Activated CD4-positive, alpha-beta T cell treated with anti-CD3 and anti-CD28 coated beads, Interleukin-2, amount 10 ng/mL, durations not matched to agents 24 days and 14 days (primary cell): ENCODE measurements at regions of chr4 and their contacts with region 1.

Region 1: GRCh38 chr4:102344954-102345794 is at the start of gene SLC39A8:
- DNase-seq: peak; percentile 96
- H3K4me3 Mint-ChIP-seq: peak within 1 kb of the TSS; percentile 88
- H3K27ac Mint-ChIP-seq: peak within 1 kb of the TSS; percentile 99
- H3K4me1 Mint-ChIP-seq: peaks cover 39% of the 10 kb centered on the region
- H3K27me3 Mint-ChIP-seq: peaks cover 7% of the 10 kb centered on the region
- total RNA-seq, gene SLC39A8: 80.4 and 81.2 TPM in 2 replicates

Region 2: GRCh38 chr4:101419324-101420135 is 925.6 kb before region 1 on chr4:
- intact Hi-C with region 1: loop called (anchors 2 kb)
- DNase-seq: peak; percentile 63
- H3K4me3 Mint-ChIP-seq: peak overlapping the region; percentile 71
- H3K27ac Mint-ChIP-seq: peak overlapping the region; percentile 55
- H3K4me1 Mint-ChIP-seq: peaks cover 44% of the 10 kb centered on the region
- H3K27me3 Mint-ChIP-seq: peaks cover 26% of the 10 kb centered on the region

Region 3: DNA sequence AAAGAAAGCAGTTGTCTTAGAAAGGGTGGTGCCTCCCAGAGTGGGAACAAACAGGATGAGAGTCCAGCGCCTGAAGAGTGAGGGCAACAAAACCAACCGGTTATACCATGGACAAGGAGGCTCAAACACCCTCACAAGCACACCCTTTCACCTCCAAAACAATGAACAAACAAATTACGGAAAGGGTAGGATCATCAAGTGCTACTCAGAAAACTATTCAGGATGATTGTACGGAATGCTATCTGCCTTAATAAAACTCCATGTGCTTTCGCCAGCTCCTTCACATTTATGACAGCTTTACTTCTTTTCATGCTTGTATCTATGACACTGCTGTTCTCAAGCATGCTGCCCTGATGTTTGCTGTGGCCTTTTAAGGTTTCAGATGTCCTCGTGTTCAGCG is 26.6 kb before region 1 on chr4:
- intact Hi-C with region 1: no loop called
- DNase-seq: peak; percentile 42
- H3K4me3 Mint-ChIP-seq: no peak overlapping the region
- H3K27ac Mint-ChIP-seq: no peak overlapping the region
- H3K4me1 Mint-ChIP-seq: peaks cover 35% of the 10 kb centered on the region
- H3K27me3 Mint-ChIP-seq: no peaks in the 10 kb centered on the region

Region 4: GRCh38 chr4:102390438-102390837 is 45.3 kb after region 1 on chr4:
- intact Hi-C with region 1: loop called (anchors 1 kb)
- DNase-seq: no peak
- H3K4me3 Mint-ChIP-seq: no peak overlapping the region
- H3K27ac Mint-ChIP-seq: peak overlapping the region; percentile 69
- H3K4me1 Mint-ChIP-seq: peaks cover 10% of the 10 kb centered on the region
- H3K27me3 Mint-ChIP-seq: peaks cover 5% of the 10 kb centered on the region

Region 5: GRCh38 chr4:102627831-102628523 is 282.8 kb after region 1 on chr4:
- intact Hi-C with region 1: loop called (anchors 2 kb)
- DNase-seq: no peak
- H3K4me3 Mint-ChIP-seq: no peak overlapping the region
- H3K27ac Mint-ChIP-seq: peak overlapping the region; percentile 79
- H3K4me1 Mint-ChIP-seq: peaks cover 51% of the 10 kb centered on the region
- H3K27me3 Mint-ChIP-seq: no peaks in the 10 kb centered on the region

Region 6: DNA sequence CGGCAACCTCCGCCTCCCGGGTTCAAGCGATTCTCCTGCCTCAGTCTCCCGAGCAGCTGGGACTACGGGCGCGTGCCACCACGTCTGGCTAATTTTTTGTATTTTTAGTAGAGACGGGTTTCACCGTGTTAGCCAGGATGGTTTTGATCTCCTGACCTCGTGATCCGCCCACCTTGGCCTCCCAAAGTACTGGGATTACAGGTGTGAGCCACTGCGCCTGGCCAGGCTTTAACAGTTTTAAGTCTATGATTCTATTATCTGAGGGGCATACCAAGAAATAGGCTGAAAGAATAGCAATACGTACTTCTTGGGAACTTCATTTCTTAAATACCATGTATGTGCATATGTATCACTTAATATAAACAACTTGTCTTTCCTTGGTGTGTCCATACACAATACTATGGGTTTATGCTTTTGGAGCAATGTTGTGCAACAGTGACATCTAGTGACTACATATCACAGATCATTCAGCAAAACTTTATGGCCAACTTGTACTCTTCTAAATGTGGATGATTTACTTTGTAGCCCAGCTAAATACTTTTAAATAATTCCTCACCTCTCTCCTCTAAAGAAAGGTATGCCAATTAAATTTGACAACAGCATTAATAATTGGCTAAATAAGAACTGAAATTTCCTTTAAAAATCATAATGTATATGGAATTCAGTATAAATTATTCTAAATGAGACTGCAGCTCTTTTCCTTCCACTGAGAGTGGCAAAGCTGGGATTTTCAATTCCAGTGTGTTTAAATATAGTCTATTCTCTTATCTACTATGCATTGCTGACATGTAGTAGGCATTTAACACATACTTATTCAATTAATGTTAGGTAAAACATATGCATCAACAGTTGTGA is 663.9 kb after region 1 on chr4:
- intact Hi-C with region 1: loop called (anchors 5 kb)
- DNase-seq: peak; percentile 83
- H3K4me3 Mint-ChIP-seq: no peak overlapping the region
- H3K27ac Mint-ChIP-seq: no peak overlapping the region
- H3K4me1 Mint-ChIP-seq: no peaks in the 10 kb centered on the region
- H3K27me3 Mint-ChIP-seq: peaks cover 8% of the 10 kb centered on the region

Region 7: DNA sequence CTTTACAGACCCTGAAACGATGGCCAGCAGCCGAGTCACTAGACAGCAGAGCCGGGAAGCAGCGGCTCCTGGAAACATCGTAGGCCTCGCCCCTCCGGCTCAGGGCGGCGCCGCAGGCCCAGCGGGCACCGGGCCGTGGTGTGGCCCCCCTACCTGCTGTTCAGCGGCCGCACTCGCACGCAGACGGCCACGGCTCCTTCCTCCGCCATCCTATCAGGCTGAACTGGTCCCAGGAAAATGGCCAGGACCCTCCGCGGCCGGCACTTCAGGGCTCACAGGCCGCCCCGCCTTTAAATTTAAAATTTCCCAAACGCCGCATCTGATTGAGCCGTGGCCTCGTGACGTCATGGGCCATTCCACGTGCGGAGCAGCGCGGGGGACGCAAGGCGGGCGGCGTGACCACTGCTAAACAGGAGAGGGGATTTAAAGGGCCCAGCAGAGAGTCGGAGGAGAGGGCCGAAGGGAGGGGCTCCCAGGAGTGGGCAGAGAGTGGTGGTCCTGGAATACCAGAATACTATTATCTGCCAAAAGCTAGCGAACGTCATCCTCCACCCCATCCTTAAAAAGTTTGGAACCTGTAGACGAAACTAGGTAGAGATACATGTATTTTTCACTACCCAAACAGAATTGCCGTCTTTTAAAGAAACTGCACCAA is 853.1 kb after region 1 on chr4 and contains the start of gene CENPE:
- intact Hi-C with region 1: loop called (anchors 1 kb)
- DNase-seq: peak; percentile 97
- H3K4me3 Mint-ChIP-seq: peak within 1 kb of the TSS; percentile 84
- H3K27ac Mint-ChIP-seq: peak within 1 kb of the TSS; percentile 100
- H3K4me1 Mint-ChIP-seq: peaks cover 28% of the 10 kb centered on the region
- H3K27me3 Mint-ChIP-seq: peaks cover 13% of the 10 kb centered on the region
- total RNA-seq, gene CENPE: 24.6 and 29.8 TPM in 2 replicates

Region 8: DNA sequence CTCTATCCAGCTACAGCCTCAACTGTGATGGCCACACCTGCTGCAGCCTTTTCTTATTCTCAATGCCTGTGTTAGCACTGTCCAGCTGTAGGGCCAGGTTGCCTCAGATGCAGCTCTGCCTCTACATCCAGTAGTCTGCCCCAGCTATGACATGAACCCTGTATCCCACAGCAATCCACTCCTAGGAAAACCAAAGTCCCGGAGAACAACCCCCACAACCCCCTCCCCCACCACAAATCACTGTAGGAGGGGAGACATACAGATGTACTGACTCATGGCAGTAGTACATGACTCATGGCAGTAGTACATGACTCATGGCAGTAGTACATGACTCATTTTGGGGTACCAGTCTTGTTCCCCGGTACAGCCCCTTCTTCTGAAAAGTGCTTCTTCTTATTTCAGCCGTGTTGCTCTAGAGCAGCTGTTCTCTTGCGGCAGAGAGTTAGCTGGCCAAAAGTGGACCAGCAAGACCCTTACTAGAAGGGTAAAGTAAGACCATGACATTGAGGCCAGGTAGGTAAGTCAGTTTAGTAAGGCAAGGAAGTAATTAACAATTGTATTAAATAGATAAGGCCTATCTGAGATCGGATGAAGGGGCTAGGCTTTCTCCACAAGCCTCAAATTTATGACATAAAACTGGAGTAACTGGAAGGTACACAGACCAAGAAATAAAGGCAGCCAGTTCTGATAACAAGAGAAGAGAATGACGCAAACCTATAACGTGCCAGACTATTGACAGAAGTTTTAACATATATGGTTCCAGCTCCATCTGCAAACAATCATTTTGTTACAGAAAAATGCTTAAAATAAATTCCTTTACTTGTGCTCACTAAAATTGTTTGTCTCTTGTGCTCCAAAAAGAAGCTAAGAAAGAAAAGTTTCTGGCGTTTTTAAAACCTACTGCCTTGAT is 1153.2 kb after region 1 on chr4:
- intact Hi-C with region 1: no loop called
- DNase-seq: peak; percentile 51
- H3K4me3 Mint-ChIP-seq: no peak overlapping the region
- H3K27ac Mint-ChIP-seq: no peak overlapping the region
- H3K4me1 Mint-ChIP-seq: peaks cover 2% of the 10 kb centered on the region
- H3K27me3 Mint-ChIP-seq: no peaks in the 10 kb centered on the region